ENCODE measurements at regions of chr4 and their contacts with region 1.

Region 1: DNA sequence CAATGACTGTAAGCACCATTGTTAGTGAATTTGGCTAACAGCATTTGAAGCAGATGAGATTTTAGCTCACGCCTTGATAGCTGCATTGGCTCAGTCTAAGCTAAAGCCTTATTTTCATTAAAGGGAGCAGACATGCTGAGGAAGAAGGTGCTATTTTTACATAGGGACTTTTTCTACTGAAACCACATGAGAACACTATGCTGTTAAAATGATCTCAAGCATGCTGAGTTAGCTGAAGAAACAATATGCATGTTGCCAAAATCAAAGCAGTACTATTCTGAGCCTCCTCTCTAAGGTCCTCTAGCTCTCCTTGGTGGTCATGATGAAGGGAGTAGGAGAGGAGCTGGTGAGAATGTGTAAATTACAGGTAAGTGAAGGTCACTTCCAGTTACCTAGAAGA is 134.4 kb upstream of the JADE1 start:
- DNase-seq: peak; percentile 46
- H3K4me3 ChIP-seq: no peak overlapping the region
- H3K27ac ChIP-seq: peak overlapping the region; percentile 47
- H3K4me1 ChIP-seq: peaks cover 15% of the 10 kb centered on the region
- CTCF ChIP-seq: no peak

Region 2: GRCh38 chr4:128502818-128503527 is 172.1 kb before region 1 on chr4:
- CTCF ChIA-PET with region 1: no interaction called
- POLR2A ChIA-PET with region 1: no interaction called
- intact Hi-C with region 1: no loop called
- DNase-seq: no peak
- H3K4me3 ChIP-seq: no peak overlapping the region
- H3K27ac ChIP-seq: no peak overlapping the region
- H3K4me1 ChIP-seq: no peaks in the 10 kb centered on the region
- CTCF ChIP-seq: no peak

Region 3: DNA sequence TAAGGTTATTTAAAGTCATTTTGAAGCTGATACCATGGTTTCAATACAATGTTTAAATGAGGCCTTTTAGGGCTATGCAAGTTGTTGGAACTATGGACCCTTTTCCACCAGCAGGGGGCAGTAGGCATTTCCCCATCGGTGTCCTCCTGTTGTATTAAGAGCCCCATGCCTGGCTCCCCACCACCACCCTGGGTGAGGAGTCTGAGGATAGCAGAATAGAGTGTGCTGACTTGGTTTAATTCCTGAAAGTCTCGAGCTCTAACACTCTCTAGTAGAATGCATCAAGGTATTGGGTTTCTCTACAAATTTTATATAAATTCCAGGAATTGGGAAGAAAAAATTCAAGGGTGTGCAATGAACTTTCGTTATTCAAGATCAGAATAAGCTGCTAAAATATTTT is 100.4 kb before region 1 on chr4:
- CTCF ChIA-PET with region 1: no interaction called
- POLR2A ChIA-PET with region 1: no interaction called
- intact Hi-C with region 1: loop called (anchors 10 kb)
- DNase-seq: peak; percentile 74
- H3K4me3 ChIP-seq: no peak overlapping the region
- H3K27ac ChIP-seq: no peak overlapping the region
- H3K4me1 ChIP-seq: no peaks in the 10 kb centered on the region
- CTCF ChIP-seq: peak; percentile 89